ENCODE measurements at regions of chr7 and their contacts with region 1.

Region 1: DNA sequence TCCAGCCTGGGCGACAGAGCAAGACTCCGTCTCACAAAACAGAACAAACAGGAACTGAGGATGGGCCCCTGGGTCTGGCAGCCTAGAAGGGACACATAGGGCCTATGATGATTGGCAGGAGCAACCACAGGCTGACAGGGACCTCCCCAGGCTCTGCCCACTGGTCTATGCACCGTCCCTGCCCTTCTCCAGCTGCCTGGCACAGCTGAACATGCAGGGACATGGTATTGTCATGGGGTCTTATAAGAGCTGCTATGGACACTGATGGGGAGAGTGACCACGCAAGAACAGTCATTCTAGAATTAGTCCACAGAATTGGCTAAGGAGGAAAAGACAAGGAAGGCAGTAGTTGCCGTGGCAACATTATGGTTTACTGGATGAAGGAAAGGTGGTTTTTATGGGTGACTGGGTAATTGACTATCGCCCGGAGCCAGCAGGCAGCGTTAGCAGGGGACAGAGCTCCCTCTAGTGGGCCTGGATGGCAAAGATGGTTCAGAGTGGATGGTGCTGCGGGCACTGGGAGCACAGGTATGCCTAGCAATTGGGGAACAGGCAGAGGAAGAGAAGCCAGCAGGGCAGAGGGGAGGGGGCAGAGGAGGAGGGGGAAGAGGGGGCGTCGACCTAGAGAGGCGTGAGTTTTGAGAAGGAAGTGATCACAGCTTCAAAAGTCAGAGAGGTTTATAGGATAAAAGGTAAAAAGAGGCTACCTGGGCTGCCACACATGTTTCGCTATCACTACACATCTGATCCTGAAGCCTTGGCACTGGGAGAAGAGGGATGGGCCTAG is 7.8 kb upstream of the TRIM56 start:
- DNase-seq: peak; percentile 90
- H3K4me3 ChIP-seq: no peak overlapping the region
- H3K27ac ChIP-seq: no peak overlapping the region
- H3K4me1 ChIP-seq: peaks cover 0 to 5% (median 0%) of the 10 kb centered on the region in 4 donors
- H3K27me3 ChIP-seq: no peaks in the 10 kb centered on the region
- CTCF ChIP-seq: peak; percentile 81 to 87 (median 84)
- EP300 ChIP-seq: no peak
- POLR2A ChIP-seq: no peak

Region 2: GRCh38 chr7:100516135-100516812 is 561.2 kb before region 1 on chr7:
- in situ Hi-C with region 1: no loop called
- intact Hi-C with region 1: no loop called
- DNase-seq: peak; percentile 31
- H3K4me3 ChIP-seq: no peak overlapping the region
- H3K27ac ChIP-seq: no peak overlapping the region
- H3K4me1 ChIP-seq: peaks cover 0 to 8% (median 0%) of the 10 kb centered on the region in 4 donors
- H3K27me3 ChIP-seq: no peaks in the 10 kb centered on the region
- CTCF ChIP-seq: no peak
- EP300 ChIP-seq: no peak
- POLR2A ChIP-seq: no peak

Region 3: DNA sequence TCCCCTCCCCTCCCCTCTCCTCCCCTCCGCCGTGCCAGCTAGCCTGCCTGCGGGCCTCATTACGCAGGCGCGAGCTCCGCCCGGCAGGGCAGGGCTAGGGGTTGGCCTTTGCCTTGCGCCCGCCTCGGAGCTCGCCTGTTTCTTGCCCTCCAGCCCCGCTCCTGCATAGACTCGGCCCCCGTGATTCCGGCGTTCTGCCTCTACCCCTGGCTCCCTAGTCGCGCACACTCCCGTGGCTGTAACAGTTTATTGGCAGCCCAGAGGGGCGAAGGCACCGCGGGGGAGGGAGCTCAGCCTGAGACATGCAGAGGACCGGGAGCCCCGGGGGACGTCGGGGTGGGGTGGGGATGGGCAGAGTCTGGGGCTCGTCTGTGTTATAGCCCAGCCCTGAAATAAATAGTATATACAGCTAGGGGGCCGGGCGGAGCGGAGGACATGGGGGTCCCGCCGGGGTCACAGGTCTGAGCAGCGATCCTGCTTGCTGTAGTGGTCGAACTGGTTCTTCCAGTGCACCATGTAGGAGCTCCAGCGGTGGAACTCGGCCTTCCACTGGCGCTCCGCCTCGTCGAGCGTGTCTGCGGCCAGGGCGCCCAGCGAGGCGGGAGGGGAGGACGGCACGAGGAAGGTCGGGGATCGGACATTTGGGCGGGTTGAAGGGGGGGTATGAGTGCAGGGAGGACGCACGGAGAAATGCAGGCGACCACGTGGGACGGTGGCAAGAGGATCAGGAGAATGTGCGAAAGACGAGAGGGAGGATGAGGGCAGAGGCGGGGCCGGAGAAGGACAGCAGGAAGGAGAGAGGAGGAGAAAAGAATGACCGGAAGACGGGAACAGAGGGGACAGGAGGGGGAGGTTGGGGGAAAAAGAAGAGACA is 187.5 kb before region 1 on chr7:
- in situ Hi-C with region 1: no loop called
- intact Hi-C with region 1: loop called (anchors 5 kb)
- DNase-seq: peak; percentile 95
- H3K4me3 ChIP-seq: peak overlapping the region; percentile 51 to 90 (median 60)
- H3K27ac ChIP-seq: peak overlapping the region; percentile 94 to 100 (median 96)
- H3K4me1 ChIP-seq: peaks cover 32 to 55% (median 36%) of the 10 kb centered on the region in 4 donors
- H3K27me3 ChIP-seq: peaks cover 13% of the 10 kb centered on the region
- CTCF ChIP-seq: peak in 1 of 5 experiments; percentile 46
- EP300 ChIP-seq: no peak
- POLR2A ChIP-seq: peak; percentile 80

Region 4: GRCh38 chr7:102044984-102045673 is 967.6 kb after region 1 on chr7:
- in situ Hi-C with region 1: no loop called
- intact Hi-C with region 1: loop called (anchors 5 kb)
- DNase-seq: no peak
- H3K4me3 ChIP-seq: peak overlapping the region in 1 of 4 donors; percentile 18
- H3K27ac ChIP-seq: peak overlapping the region in 3 of 4 donors; percentile 12 to 44 (median 37)
- H3K4me1 ChIP-seq: peaks cover 0 to 7% (median 2%) of the 10 kb centered on the region in 4 donors
- H3K27me3 ChIP-seq: no peaks in the 10 kb centered on the region
- CTCF ChIP-seq: no peak
- EP300 ChIP-seq: no peak
- POLR2A ChIP-seq: no peak

Measured in transverse colon (tissue), 4 donors.